Cardiac septum (tissue), 1 donor: ENCODE measurements at regions of chr13 and their contacts with region 1.

Region 1: GRCh38 chr13:99442273-99442895 is 58.9 kb upstream of the TM9SF2 start:
- DNase-seq: no peak

Region 2: GRCh38 chr13:99501184-99501847 is 58.9 kb after region 1 on chr13 and contains the start of gene TM9SF2:
- intact Hi-C with region 1: loop called (anchors 5 kb)
- DNase-seq: peak; percentile 98
- total RNA-seq, gene TM9SF2: 61.8 TPM

Region 3: DNA sequence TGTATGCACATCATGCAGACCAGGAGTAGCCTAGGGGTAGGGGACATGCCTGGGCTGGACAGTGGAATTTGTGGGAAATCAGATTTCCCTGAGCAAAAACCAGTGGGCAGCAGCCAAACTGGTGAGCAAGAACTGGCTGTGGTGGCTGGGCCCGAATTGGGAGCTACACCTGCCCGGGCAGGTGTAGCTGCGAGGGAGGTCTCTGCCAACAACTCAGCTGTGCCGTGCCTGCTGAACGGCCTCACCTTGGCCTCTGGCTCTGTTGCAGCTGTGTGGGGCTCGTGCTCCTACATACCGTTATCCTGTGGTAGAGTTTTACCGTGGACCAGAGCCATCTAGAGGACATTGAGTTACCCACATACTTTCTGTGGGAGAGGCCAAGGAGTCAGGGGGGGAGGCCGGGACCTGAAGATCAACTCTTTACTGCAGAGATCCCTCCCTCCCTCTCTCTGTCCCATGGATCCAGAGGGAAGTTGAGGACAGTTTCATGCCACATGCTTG is 172.1 kb after region 1 on chr13:
- intact Hi-C with region 1: loop called (anchors 5 kb)
- DNase-seq: no peak